GM12878 (cell line): ENCODE measurements at regions of chr2 and their contacts with region 1.

Region 1: DNA sequence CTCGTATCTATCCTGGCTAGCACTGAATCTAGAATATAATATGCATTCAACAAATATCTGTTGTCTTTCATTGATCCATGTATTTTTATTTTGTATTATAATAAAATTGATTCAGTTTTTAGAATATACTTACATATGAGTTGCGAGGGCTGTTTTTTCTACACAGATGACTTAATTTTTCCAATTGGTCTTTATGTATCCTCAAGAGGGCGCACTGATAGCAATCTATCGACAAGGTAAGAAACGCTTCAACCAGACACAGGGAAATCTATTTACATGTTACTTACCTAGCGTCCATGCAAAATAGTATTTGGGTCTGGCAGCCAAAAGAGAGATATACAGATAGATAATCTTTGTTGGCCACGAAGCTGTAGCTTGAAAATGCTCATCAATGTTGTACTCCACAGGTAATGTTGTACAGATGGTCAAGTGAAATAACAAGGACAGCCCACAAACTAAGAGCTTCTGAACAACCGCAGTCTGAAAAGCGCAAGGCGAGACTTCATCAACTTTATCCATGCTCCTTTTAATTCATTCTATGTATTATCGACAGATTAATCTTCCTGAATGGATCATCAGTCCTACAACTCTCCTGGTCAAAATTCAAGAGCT is 35.5 kb upstream of the KIDINS220 start:
- DNase-seq: peak; percentile 17
- ATAC-seq: peak; percentile 80
- H3K4me3 ChIP-seq: no peak overlapping the region
- H3K27ac ChIP-seq: no peak overlapping the region
- H3K4me1 ChIP-seq: peaks cover 10% of the 10 kb centered on the region; the same call in 1 of the 2 replicates
- H3K27me3 ChIP-seq: no peaks in the 10 kb centered on the region
- CTCF ChIP-seq: peak; percentile 54 to 62 (median 61)
- EP300 ChIP-seq: no peak
- POLR2A ChIP-seq: no peak
- RAD21 ChIP-seq: peak; percentile 65

Region 2: DNA sequence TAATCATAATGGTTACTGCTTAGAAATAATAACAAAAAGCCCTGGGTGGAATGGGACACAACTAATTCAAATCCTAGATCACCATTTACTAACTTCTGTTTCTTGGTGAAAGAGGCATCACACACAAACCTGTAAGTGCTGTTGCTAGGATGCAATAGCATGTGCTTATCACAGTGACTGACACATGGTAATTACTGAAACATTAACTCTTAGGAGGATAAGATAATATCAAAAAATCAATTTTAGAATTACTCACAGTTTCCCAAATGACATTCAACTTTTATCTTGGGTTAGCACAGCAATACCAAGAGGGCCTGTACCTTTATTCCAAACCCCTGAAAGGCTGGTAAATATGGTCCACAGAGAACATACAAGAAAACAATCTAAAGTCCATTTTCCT is 61.4 kb after region 1 on chr2:
- CTCF ChIA-PET with region 1: no interaction called
- POLR2A ChIA-PET with region 1: no interaction called
- RAD21 ChIA-PET with region 1: no interaction called
- SMC1A ChIA-PET with region 1: no interaction called
- in situ Hi-C with region 1: no loop called
- intact Hi-C with region 1: no loop called
- DNase-seq: no peak
- ATAC-seq: no peak
- H3K4me3 ChIP-seq: no peak overlapping the region
- H3K27ac ChIP-seq: no peak overlapping the region
- H3K4me1 ChIP-seq: no peaks in the 10 kb centered on the region
- H3K27me3 ChIP-seq: no peaks in the 10 kb centered on the region
- CTCF ChIP-seq: no peak
- EP300 ChIP-seq: no peak
- POLR2A ChIP-seq: no peak
- RAD21 ChIP-seq: no peak

Region 3: GRCh38 chr2:8986327-8986976 is 113.5 kb after region 1 on chr2:
- CTCF ChIA-PET with region 1: interaction called, 21 read pairs
- POLR2A ChIA-PET with region 1: no interaction called
- RAD21 ChIA-PET with region 1: interaction called, 27 read pairs
- SMC1A ChIA-PET with region 1: interaction called, 30 read pairs
- in situ Hi-C with region 1: no loop called
- intact Hi-C with region 1: loop called (anchors 2 kb)
- DNase-seq: no peak
- ATAC-seq: peak; percentile 65
- H3K4me3 ChIP-seq: no peak overlapping the region
- H3K27ac ChIP-seq: no peak overlapping the region
- H3K4me1 ChIP-seq: peaks cover 23% of the 10 kb centered on the region
- H3K27me3 ChIP-seq: no peaks in the 10 kb centered on the region
- CTCF ChIP-seq: peak; percentile 38 to 69 (median 52); a peak in 5 of 6 replicates
- EP300 ChIP-seq: no peak
- POLR2A ChIP-seq: no peak
- RAD21 ChIP-seq: 0 out of 2 replicates have a peak, but pooled peaks have one; percentile 10

Region 4: GRCh38 chr2:9095690-9096351 is 222.9 kb after region 1 on chr2:
- CTCF ChIA-PET with region 1: interaction called, 32 read pairs
- POLR2A ChIA-PET with region 1: no interaction called
- RAD21 ChIA-PET with region 1: interaction called, 9 read pairs
- SMC1A ChIA-PET with region 1: interaction called, 20 read pairs
- in situ Hi-C with region 1: no loop called
- intact Hi-C with region 1: no loop called
- DNase-seq: no peak
- ATAC-seq: no peak
- H3K4me3 ChIP-seq: no peak overlapping the region
- H3K27ac ChIP-seq: no peak overlapping the region
- H3K4me1 ChIP-seq: peaks cover 42% of the 10 kb centered on the region
- H3K27me3 ChIP-seq: no peaks in the 10 kb centered on the region
- CTCF ChIP-seq: 0 out of 6 replicates have a peak, but pooled peaks of 1 of the 3 experiments have one; percentile 5
- EP300 ChIP-seq: no peak
- POLR2A ChIP-seq: no peak
- RAD21 ChIP-seq: no peak

Region 5: GRCh38 chr2:9137392-9138150 is 264.6 kb after region 1 on chr2:
- CTCF ChIA-PET with region 1: interaction called, 98 read pairs
- POLR2A ChIA-PET with region 1: interaction called, 7 read pairs
- RAD21 ChIA-PET with region 1: interaction called, 11 read pairs
- SMC1A ChIA-PET with region 1: interaction called, 21 read pairs
- in situ Hi-C with region 1: loop called (anchors 5 kb)
- intact Hi-C with region 1: loop called (anchors 1 kb)
- DNase-seq: no peak
- ATAC-seq: no peak
- H3K4me3 ChIP-seq: no peak overlapping the region
- H3K27ac ChIP-seq: no peak overlapping the region
- H3K4me1 ChIP-seq: no peaks in the 10 kb centered on the region
- H3K27me3 ChIP-seq: no peaks in the 10 kb centered on the region
- CTCF ChIP-seq: no peak
- EP300 ChIP-seq: no peak
- POLR2A ChIP-seq: no peak
- RAD21 ChIP-seq: no peak

Region 6: GRCh38 chr2:9238591-9239326 is 365.8 kb after region 1 on chr2:
- CTCF ChIA-PET with region 1: no interaction called
- POLR2A ChIA-PET with region 1: no interaction called
- RAD21 ChIA-PET with region 1: no interaction called
- SMC1A ChIA-PET with region 1: no interaction called
- in situ Hi-C with region 1: no loop called
- intact Hi-C with region 1: no loop called
- DNase-seq: no peak
- ATAC-seq: no peak
- H3K4me3 ChIP-seq: no peak overlapping the region
- H3K27ac ChIP-seq: no peak overlapping the region
- H3K4me1 ChIP-seq: no peaks in the 10 kb centered on the region
- H3K27me3 ChIP-seq: peaks cover 0 to 2% of the 10 kb centered on the region in 2 experiments; a peak in 2 of 4 replicates
- CTCF ChIP-seq: no peak
- EP300 ChIP-seq: no peak
- POLR2A ChIP-seq: no peak
- RAD21 ChIP-seq: no peak